ENCODE measurements at regions of chr17 and their contacts with region 1.

Region 1: DNA sequence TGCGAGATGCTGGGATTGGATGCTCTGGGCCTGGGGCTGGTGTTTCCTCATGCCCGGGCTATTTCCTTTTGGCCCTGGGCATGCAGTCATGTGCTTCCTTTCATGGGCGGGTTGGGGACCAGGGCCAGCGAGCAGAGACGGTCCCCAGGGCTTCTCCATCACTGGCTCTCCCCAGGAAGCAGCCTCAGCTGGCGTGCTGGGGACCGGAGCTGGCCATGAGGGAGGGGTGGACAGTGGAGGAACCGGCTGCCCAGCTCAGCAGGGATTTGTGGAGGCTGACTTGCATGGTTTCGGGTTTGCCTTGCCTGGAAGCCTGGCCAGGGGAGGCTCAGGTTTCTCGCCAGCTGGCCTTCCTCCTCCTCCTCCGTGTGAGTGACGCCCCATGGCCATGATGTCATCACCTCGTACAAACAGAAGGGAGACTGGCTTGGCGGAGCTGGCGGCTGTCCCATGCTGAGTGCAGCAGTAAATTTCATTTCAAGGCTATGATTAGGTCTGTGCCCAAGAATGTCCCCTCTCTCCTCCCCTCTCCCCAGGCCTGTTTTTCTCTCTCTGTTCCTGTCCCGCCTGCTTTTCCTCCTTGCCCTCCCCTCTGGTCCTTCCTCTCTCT is 8.9 kb upstream of the TIMP2 start:
- DNase-seq: peak; percentile 68 to 94 (median 82)

Region 2: DNA sequence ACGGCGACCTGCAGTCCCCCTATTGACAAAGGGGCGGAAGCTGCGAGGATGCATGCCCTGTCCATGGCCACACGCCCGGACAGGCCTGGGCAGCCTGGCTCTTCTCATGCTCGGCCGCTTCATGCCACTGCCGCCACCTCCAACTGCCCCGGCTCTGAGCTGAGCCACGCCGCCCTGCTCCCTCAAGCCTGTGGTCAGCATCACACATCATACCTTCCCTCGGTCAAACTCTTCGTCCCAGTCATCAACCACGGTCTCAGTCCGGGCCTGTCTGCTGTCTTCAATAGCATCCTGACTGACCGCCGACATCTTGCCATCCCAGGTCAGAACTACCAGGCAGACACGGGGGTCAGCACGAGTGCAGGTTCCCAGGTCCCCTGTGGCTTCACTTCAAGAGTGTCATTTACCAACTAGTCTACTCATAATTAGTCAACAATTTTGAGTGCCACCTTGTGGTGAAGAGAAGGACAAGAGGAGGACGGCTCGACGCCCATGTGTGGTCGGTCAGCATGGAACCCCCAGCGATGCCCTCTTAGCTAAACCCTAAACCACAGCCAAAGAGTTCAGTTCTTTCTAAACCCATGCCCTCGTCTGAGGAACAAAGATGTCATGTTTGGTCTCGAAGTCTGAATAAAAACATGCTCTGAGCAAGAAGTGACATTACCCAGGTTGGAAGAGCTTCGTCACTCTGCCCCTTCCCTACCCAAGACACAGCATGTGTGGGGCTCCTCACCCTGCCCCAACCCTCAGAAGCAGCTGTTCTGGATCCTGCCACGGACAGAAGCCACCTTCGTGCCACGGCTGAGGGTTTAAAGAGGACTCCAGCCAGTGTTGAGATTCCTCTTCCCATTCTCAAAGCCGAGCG is 135.1 kb before region 1 on chr17:
- intact Hi-C with region 1: no loop called
- DNase-seq: peak in 16 of 42 donors; percentile 25 to 76 (median 46)

Region 3: GRCh38 chr17:78840725-78841611 is 93.1 kb before region 1 on chr17 and contains the start of gene USP36:
- intact Hi-C with region 1: no loop called
- DNase-seq: peak; percentile 99 to 100 (median 100)

Region 4: GRCh38 chr17:78883164-78884122 is 50.6 kb before region 1 on chr17:
- intact Hi-C with region 1: loop called (anchors 5 kb)
- DNase-seq: peak; percentile 79 to 97 (median 89)

Region 5: DNA sequence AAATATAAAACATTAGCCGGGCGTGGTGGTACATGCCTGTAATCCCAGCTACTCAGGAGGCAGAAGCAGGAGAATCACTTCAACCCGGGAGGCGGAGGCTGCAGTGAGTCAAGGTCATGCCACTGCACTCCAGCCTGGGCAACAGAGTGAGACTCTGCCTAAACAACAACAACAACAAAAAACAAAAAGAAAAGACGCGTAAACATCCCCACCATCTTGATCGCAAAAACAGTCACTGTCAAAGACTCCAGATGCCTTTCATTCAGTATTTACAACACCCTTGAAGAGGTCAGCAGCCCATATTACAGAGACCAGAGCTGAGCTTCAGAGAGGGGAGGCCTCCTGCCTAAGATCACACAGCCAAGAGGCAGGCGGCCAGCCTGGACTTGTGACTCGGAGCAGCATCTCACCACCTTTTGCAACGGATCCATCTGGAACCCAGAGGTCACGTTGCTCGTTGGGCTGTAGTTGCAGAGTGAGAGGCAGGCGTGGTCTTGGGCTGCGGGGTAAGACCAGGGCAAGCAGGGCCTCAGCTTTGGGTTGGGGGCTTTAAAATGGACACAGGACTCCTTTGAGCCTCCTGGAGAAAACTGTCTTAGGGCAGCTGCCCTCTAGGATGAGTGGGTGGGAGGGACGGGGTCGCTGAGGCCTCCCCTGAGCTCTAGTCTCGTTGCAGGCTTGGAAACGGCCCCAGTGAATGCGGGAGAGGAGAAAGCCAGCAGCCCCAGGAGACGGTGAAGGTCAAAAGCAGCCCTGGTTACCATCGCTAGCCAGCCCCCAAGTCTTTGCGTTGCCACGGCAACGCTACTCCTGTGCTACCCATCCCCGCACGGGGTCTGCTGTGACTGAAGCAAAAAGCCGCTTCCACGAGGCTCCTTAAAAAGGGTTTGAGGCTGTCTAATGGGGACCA is 19.5 kb after region 1 on chr17:
- intact Hi-C with region 1: no loop called
- DNase-seq: peak in 1 of 42 donors; percentile 18

Region 6: DNA sequence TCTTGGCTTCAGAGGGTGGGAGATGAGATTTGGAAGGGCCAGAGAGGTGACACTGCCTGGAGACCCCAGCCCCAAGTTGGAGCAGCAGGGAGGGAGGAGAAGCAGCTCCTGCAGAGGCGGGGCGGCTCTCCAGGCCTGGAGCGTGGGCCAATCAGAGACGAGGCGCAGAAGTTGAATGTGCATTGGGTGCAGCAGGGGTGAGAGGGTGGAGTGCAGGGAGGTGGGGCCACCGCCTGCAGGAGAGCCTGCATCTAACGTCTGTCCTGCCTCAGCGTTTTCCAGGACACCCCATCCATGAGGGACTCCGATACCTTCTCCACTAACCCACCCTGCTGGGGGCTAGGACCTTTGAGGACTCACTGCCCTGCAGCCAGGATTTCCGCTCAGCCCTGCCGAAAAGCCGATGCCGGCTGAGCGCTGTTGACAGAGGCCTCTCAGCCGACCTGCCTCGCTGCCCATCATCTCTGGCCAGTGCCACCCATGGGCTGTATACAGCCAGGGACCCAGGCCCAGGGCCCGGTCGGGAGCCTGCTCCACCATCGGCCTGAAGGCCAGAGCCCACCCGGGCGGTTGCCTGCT is 286.7 kb after region 1 on chr17:
- intact Hi-C with region 1: no loop called
- DNase-seq: no peak

Measured in head of caudate nucleus (tissue), 42 donors.